RWPE1 (cell line): ENCODE measurements at regions of chr20 and their contacts with region 1.

Region 1: GRCh38 chr20:44692932-44693476 is 22.2 kb upstream of the CCN5 start:
- DNase-seq: peak; percentile 98
- H3K27ac ChIP-seq: peak overlapping the region; percentile 70
- CTCF ChIP-seq: no peak

Region 2: GRCh38 chr20:44422083-44422482 is 270.9 kb before region 1 on chr20:
- CTCF ChIA-PET with region 1: no interaction called
- POLR2A ChIA-PET with region 1: no interaction called
- DNase-seq: peak; percentile 83
- H3K27ac ChIP-seq: no peak overlapping the region
- CTCF ChIP-seq: no peak

Region 3: GRCh38 chr20:44733341-44734069 is 40.5 kb after region 1 on chr20:
- CTCF ChIA-PET with region 1: interaction called, 184 read pairs
- POLR2A ChIA-PET with region 1: interaction called, 11 read pairs
- DNase-seq: peak; percentile 90
- H3K27ac ChIP-seq: no peak overlapping the region
- CTCF ChIP-seq: peak; percentile 99

Region 4: GRCh38 chr20:44800398-44801046 is 107.5 kb after region 1 on chr20:
- CTCF ChIA-PET with region 1: no interaction called
- POLR2A ChIA-PET with region 1: no interaction called
- DNase-seq: no peak
- H3K27ac ChIP-seq: no peak overlapping the region
- CTCF ChIP-seq: no peak; the same call in 1 of the 2 replicates